Prostate gland (tissue), 2 donors: ENCODE measurements at regions of chr18 and their contacts with region 1.

Region 1: DNA sequence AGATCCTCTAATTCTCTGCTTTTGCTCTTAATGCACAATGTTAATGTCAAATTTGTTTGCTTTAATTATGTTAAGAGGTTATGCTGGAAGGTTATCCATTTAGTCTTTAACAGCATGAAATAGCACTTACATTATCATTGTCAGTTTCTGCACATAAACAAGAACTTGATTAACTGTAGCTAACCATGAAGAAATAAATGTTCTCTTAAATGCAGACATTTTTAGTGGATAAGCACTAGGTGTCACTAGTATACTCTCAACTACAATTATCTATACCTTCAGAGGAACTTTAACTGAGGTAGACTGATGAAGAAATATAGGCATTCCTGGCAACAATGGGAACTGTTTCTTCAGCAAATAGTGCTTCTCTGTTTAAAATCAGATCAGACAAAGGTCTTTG is 178.8 kb upstream of the CHST9 start:
- DNase-seq: no peak
- H3K4me3 ChIP-seq: no peak overlapping the region
- H3K27ac ChIP-seq: no peak overlapping the region
- H3K4me1 ChIP-seq: no peaks in the 10 kb centered on the region
- H3K27me3 ChIP-seq: no peaks in the 10 kb centered on the region
- CTCF ChIP-seq: peak in 2 of 4 experiments; percentile 28 to 47
- POLR2A ChIP-seq: no peak

Region 2: DNA sequence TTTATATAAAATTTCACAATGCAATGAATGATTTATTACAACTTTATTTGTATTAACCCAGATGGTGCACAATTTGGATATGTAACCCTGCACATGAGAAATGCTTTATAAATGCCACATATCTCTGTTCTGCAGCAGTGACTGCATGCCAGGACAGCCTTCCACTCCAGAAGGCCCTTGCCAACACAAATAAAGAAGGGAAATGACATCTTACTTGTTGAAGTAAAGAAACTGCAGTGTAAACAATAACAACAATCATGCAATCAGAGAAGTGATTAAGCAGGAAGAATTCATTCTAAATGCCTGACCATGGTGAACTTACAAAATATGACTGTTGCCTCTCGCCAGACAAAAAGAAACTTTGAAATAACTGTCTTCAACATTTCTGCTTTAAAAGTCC is 48.9 kb before region 1 on chr18:
- intact Hi-C with region 1: loop called (anchors 10 kb)
- DNase-seq: no peak
- H3K4me3 ChIP-seq: no peak overlapping the region
- H3K27ac ChIP-seq: no peak overlapping the region
- H3K4me1 ChIP-seq: no peaks in the 10 kb centered on the region
- H3K27me3 ChIP-seq: no peaks in the 10 kb centered on the region
- CTCF ChIP-seq: no peak
- POLR2A ChIP-seq: no peak

Region 3: DNA sequence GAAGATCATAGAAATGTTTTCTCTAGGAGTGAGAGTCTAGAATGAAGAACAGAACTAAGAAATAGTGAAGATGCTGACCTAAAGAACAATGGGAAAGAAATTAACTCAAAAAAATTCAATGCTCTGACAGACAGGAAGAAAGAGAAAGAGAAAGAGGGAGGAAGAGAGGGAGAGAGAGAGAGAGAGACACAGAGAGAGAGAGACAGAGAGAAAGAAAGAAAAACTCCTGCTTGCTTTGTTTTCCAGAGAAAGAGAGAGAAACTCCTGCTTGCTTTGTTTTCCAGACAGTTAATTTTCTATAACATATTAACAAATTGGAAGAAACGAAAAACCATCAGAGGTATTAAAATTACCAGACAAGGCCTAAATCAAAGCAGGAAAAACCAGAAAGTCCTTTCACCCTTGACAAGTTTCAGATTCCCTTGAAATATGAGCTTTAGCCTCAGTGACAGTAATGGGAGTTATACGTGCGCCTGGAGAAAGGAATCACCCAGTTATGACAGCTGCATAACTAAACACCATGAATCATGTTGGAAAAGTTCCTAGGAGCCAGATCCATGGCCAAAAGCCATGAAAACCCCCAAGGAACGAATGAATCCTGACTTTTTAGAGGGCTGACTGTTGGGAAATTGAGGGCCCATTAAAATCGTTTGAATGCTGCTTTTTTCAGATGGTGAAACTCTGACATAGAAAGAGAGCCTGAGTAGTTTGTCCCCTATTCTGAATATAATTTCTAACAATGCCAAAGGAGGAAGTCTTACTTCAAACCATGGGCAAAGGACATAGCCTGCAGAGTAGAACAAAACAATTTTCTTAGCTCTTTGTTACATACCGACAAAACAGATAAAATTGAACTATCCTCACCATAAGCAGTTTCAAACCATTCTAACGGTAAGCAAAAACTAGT is 49.9 kb after region 1 on chr18:
- intact Hi-C with region 1: no loop called
- DNase-seq: no peak
- H3K4me3 ChIP-seq: no peak overlapping the region
- H3K27ac ChIP-seq: no peak overlapping the region
- H3K4me1 ChIP-seq: no peaks in the 10 kb centered on the region
- H3K27me3 ChIP-seq: no peaks in the 10 kb centered on the region
- CTCF ChIP-seq: no peak
- POLR2A ChIP-seq: no peak

Region 4: DNA sequence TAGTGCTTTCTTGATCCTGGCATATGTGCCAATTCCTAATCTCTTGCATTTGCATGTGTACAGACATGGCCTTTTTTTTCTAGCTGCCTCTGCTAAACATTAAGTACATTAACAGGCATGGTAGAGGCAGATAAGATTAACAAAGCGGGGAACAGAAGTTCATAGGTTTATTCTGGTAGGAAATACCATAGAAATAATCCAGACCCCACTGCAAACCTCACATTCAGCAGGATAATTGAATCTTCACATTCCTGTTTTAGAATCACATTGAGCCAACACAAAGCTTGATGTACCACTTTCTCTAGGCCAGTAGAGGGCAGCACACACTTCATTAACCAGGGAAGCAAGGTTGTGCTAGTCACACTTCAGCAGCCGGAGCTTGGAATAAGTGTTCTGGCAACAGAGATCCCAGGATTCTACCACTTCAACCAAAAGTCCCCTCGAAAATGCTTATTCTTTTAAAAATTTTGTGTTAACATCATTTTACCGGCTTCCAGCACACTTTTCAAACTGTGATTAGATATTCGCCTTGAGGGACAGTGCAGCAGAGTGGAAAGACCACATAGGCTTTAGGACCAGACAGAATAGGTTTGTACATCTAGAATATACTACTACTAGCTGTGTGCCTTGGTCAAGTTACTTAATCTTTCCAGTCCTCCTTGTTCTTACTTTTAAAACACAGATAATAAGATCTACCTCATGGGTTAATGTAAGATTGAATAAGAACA is 241.4 kb after region 1 on chr18:
- intact Hi-C with region 1: loop called (anchors 5 kb)
- DNase-seq: peak; percentile 52
- H3K4me3 ChIP-seq: no peak overlapping the region
- H3K27ac ChIP-seq: no peak overlapping the region
- H3K4me1 ChIP-seq: no peaks in the 10 kb centered on the region
- H3K27me3 ChIP-seq: no peaks in the 10 kb centered on the region
- CTCF ChIP-seq: peak in 3 of 4 experiments; percentile 65 to 70 (median 66)
- POLR2A ChIP-seq: no peak